ENCODE measurements at regions of chr2 and their contacts with region 1.

Region 1: GRCh38 chr2:168890006-168890782 is at the start of gene SPC25:
- DNase-seq: peak; percentile 94
- ATAC-seq: peak; percentile 100
- H3K4me3 Mint-ChIP-seq: peak within 1 kb of the TSS; percentile 84
- H3K27ac Mint-ChIP-seq: peak within 1 kb of the TSS; percentile 86
- H3K4me1 Mint-ChIP-seq: peaks cover 14% of the 10 kb centered on the region
- H3K27me3 Mint-ChIP-seq: no peaks in the 10 kb centered on the region
- total RNA-seq, gene SPC25: 33.7 to 38.4 TPM

Region 2: GRCh38 chr2:168939918-168940317 is 49.7 kb after region 1 on chr2:
- CTCF ChIA-PET with region 1: interaction called, 3 read pairs
- POLR2A ChIA-PET with region 1: no interaction called
- intact Hi-C with region 1: loop called in 1 of 2 experiments (anchors 5 kb)
- DNase-seq: no peak
- ATAC-seq: peak; percentile 51
- H3K4me3 Mint-ChIP-seq: no peak overlapping the region
- H3K27ac Mint-ChIP-seq: no peak overlapping the region
- H3K4me1 Mint-ChIP-seq: peaks cover 4% of the 10 kb centered on the region
- H3K27me3 Mint-ChIP-seq: peaks cover 7% of the 10 kb centered on the region

Region 3: GRCh38 chr2:169363560-169364150 is 473.5 kb after region 1 on chr2:
- CTCF ChIA-PET with region 1: no interaction called
- POLR2A ChIA-PET with region 1: no interaction called
- intact Hi-C with region 1: loop called in 1 of 2 experiments (anchors 2 kb)
- DNase-seq: peak; percentile 80
- ATAC-seq: peak; percentile 73
- H3K4me3 Mint-ChIP-seq: peak overlapping the region; percentile 86
- H3K27ac Mint-ChIP-seq: peak overlapping the region; percentile 49
- H3K4me1 Mint-ChIP-seq: peaks cover 29% of the 10 kb centered on the region
- H3K27me3 Mint-ChIP-seq: peaks cover 38% of the 10 kb centered on the region

Measured in activated CD4-positive, alpha-beta T cell treated with anti-CD3 and anti-CD28 coated beads for 36 hours (primary cell).